Dendritic cell treated with granulocyte-macrophage colony-stimulating factor and Interleukin-4, amounts not matched to agents 40 ng/mL and 50 ng/mL, for 4 days (primary cell): ENCODE measurements at regions of chr14 and their contacts with region 1.

Region 1: GRCh38 chr14:57390028-57390805 is at the start of gene NAA30:
- H3K4me3 Mint-ChIP-seq: peak within 1 kb of the TSS; percentile 88
- H3K27ac Mint-ChIP-seq: peak within 1 kb of the TSS; percentile 86
- H3K4me1 Mint-ChIP-seq: peaks cover 21% of the 10 kb centered on the region
- H3K27me3 Mint-ChIP-seq: no peaks in the 10 kb centered on the region

Region 2: GRCh38 chr14:57268161-57269069 is 121.8 kb before region 1 on chr14 and contains the starts of genes AP5M1 and EXOC5:
- intact Hi-C with region 1: loop called (anchors 5 kb)
- H3K4me3 Mint-ChIP-seq: peak within 1 kb of the TSS; percentile 98
- H3K27ac Mint-ChIP-seq: peak within 1 kb of the TSS; percentile 98
- H3K4me1 Mint-ChIP-seq: peaks cover 44% of the 10 kb centered on the region
- H3K27me3 Mint-ChIP-seq: no peaks in the 10 kb centered on the region

Region 3: GRCh38 chr14:57413849-57414248 is 23.6 kb after region 1 on chr14:
- intact Hi-C with region 1: no loop called
- H3K4me3 Mint-ChIP-seq: no peak overlapping the region
- H3K27ac Mint-ChIP-seq: no peak overlapping the region
- H3K4me1 Mint-ChIP-seq: no peaks in the 10 kb centered on the region
- H3K27me3 Mint-ChIP-seq: no peaks in the 10 kb centered on the region

Region 4: DNA sequence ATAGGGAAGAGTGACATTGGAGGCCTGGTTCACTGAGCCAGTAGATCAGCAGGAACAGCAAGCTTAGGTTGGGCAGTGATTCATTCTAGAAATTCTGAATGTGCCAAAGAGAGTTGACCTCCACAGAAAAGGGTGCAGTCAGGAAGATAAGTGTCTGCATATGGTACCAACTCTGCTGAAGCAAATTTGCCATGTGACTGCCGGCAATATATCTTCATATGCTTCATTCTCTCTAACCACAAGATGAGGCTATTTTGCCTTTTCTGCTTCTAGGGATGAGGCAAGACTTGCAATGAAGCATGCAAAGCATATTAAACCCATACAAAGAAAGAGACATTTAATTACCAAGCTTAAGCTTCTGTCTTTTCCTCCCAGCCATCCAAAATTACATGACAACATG is 89.8 kb after region 1 on chr14:
- intact Hi-C with region 1: no loop called
- H3K4me3 Mint-ChIP-seq: no peak overlapping the region
- H3K27ac Mint-ChIP-seq: no peak overlapping the region
- H3K4me1 Mint-ChIP-seq: no peaks in the 10 kb centered on the region
- H3K27me3 Mint-ChIP-seq: no peaks in the 10 kb centered on the region

Region 5: GRCh38 chr14:57549765-57550420 is 159.7 kb after region 1 on chr14:
- intact Hi-C with region 1: no loop called
- H3K4me3 Mint-ChIP-seq: no peak overlapping the region
- H3K27ac Mint-ChIP-seq: no peak overlapping the region
- H3K4me1 Mint-ChIP-seq: no peaks in the 10 kb centered on the region
- H3K27me3 Mint-ChIP-seq: no peaks in the 10 kb centered on the region

Region 6: DNA sequence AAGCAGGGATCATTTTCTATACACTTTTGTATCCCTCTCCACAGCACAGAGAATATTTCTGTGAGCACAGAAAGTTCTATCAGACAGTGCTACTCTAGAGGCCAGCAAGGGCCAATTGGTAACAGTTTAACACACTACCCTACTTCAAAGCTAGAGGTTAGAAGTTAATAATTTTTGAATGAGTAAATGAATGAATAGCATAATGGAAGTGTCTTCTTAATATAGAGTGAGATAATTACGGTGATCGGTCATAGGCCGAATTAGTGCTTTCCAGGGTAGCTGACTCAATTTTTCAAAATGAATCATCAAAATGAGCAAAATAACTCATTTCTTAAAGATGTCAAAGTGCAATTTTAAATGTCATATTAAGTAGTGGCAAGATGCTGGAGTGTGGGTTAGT is 170.5 kb after region 1 on chr14:
- intact Hi-C with region 1: no loop called
- H3K4me3 Mint-ChIP-seq: no peak overlapping the region
- H3K27ac Mint-ChIP-seq: no peak overlapping the region
- H3K4me1 Mint-ChIP-seq: no peaks in the 10 kb centered on the region
- H3K27me3 Mint-ChIP-seq: no peaks in the 10 kb centered on the region